Activated T-helper 2 cell treated with anti-CD3 and anti-CD28 coated beads, Interferon-gamma antibody, Interleukin-2, Interleukin-4, amounts not matched to agents 10 μg/mL and 5 μg/mL and 100 μg/mL, durations not matched to agents 14 hours and 24 hours and 36 hours (primary cell): ENCODE measurements at regions of chr10 and their contacts with region 1.

Region 1: GRCh38 chr10:118732245-118733165 is 22.3 kb downstream of the CACUL1 start:
- DNase-seq: no peak
- H3K4me3 Mint-ChIP-seq: no peak overlapping the region
- H3K27ac Mint-ChIP-seq: no peak overlapping the region
- H3K4me1 Mint-ChIP-seq: peaks cover 45% of the 10 kb centered on the region
- H3K27me3 Mint-ChIP-seq: peaks cover 33% of the 10 kb centered on the region

Region 2: GRCh38 chr10:118698421-118698820 is 34.1 kb before region 1 on chr10:
- intact Hi-C with region 1: loop called (anchors 1 kb)
- DNase-seq: peak; percentile 80
- H3K4me3 Mint-ChIP-seq: peak overlapping the region; percentile 63
- H3K27ac Mint-ChIP-seq: no peak overlapping the region
- H3K4me1 Mint-ChIP-seq: peaks cover 18% of the 10 kb centered on the region
- H3K27me3 Mint-ChIP-seq: no peaks in the 10 kb centered on the region

Region 3: DNA sequence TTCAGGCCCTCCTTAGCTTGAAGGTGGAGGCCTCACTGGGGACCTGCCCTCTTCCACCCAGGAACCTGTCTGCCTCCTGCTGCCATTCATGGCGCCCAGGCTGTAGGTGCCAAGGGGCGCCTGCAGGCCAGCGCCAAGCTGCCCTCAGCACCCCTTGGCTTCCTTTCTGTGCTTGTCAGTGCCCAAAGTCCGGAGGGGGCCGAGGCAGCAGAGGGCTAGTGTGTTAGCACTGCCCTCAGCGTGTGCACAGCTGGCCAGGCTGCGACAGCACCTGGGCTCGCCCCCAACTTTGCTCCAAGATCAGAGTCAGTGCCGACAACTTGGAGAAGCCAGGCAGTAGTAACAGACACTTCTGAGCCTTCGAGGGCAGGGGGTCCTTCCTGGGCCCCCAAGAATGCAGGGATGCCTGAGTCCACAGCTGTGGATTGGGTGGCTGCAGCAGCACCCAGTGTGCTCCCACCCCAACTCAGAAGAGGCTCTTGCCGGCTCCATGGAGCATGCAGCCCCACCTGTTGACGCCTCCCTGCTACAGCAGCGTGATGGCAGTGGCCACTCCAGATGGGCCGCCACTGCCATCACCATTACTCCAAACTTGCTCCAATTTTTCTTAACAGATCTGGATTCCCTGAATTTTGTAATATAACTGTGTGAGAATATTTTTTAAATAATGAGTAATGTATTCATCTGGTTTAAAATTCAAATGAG is 19.4 kb before region 1 on chr10:
- intact Hi-C with region 1: no loop called
- DNase-seq: no peak
- H3K4me3 Mint-ChIP-seq: no peak overlapping the region
- H3K27ac Mint-ChIP-seq: no peak overlapping the region
- H3K4me1 Mint-ChIP-seq: peaks cover 5% of the 10 kb centered on the region
- H3K27me3 Mint-ChIP-seq: no peaks in the 10 kb centered on the region

Region 4: DNA sequence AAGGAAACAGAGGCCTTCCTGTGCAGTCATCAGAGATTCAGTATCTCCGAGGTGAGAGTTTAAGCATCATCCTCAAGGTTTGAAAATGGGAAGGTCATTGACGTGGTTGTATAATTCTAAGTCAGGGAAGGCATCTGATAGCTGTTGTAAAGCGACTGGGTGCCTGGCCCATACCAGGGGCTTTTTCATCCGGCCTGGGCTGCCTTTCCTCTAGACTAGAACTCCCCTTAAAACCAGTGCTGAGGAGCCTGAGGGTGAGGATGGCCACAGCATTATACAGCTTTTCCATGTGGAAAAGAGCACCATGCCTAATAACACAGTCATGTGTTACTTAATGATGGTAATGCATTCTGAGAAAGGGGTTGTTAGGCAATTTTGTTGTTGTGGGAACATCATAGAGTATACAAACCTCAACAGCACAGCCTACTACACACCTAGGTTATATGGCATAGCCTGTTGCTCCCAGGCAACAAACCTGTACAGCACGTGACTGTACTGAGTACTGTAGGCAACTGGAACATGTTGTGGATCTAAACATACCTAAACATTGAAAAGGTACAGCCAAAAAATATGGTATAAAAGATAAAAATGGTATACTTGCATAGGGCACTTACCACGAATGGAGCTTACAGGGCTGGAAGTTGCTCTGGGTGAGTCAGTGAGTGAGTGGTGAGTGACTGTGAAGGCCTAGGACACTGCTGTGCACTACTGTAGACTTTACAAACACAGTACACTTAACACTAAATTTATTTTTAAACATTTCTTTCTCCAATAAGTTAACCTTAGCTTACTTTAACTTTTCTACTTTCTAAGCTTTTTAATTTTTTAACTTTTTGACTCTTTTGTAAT is 35.8 kb after region 1 on chr10:
- intact Hi-C with region 1: no loop called
- DNase-seq: no peak
- H3K4me3 Mint-ChIP-seq: no peak overlapping the region
- H3K27ac Mint-ChIP-seq: no peak overlapping the region
- H3K4me1 Mint-ChIP-seq: no peaks in the 10 kb centered on the region
- H3K27me3 Mint-ChIP-seq: no peaks in the 10 kb centered on the region